BJ (cell line): ENCODE measurements at regions of chr14 and their contacts with region 1.

Region 1: GRCh38 chr14:94180655-94181271 is 6.6 kb downstream of the PPP4R4 start:
- DNase-seq: no peak
- H3K4me3 ChIP-seq: no peak overlapping the region
- H3K27me3 ChIP-seq: peaks cover 1% of the 10 kb centered on the region; the same call in 1 of the 2 replicates
- CTCF ChIP-seq: peak; percentile 59

Region 2: DNA sequence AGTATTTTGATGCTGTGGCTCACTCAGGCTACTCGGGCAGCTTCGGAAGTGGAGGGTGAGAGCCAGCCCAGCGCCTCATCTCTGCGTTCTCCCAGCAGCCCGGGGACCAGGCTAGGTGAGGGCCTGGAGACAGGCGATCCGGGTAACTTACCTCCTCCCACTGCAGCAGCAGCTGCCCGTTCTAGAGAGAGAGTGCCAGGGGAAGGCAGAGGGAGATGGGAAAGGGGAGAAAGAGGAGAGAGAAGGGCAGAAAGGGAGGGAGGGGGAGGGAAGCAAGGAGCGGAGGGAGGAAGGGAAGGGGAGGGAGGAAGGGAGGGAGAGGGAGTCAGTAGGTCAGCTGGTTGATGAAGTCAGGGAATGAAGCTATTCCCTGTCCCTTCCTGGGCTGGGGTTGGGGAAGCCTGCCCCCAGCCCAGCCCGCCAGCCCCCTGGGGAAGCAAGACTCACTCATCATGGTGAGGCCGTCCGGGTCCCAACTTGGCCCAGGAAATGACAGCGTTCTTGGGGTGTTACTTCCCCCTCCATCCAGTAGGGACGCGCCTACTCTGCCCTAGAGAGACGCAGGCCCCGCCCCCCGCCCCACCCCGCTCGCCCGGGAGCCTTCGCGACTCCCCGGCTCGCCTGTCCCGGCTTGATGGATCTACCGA is 51.5 kb before region 1 on chr14 and contains the start of gene IFI27L2:
- CTCF ChIA-PET with region 1: interaction called, 13 read pairs
- POLR2A ChIA-PET with region 1: no interaction called
- DNase-seq: no peak
- H3K4me3 ChIP-seq: peak within 1 kb of the TSS; percentile 60
- H3K27me3 ChIP-seq: no peaks in the 10 kb centered on the region
- CTCF ChIP-seq: peak; percentile 48
- polyA plus RNA-seq, gene IFI27L2: 122 and 201 TPM in 2 replicates

Region 3: DNA sequence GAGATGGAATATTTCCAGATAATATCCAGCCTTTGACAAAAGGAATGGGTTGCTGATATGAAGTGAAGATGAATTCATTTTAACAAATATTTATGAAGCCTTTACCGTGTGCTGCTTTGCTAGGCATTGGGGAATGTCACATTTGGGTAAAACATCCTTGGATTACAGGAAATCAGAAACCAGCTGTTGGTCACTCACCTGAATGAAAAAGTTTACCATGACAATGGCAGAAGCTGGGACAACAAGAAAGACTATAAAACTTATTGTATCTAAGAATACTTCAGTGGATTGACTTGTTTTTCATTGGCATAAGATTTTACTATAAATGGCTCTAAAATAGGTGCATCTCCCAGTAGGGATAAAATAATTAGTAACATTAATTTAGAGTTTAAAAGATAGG is 13.0 kb after region 1 on chr14:
- CTCF ChIA-PET with region 1: interaction called, 28 read pairs
- POLR2A ChIA-PET with region 1: no interaction called
- DNase-seq: no peak
- H3K4me3 ChIP-seq: no peak overlapping the region
- H3K27me3 ChIP-seq: no peaks in the 10 kb centered on the region
- CTCF ChIP-seq: no peak

Region 4: DNA sequence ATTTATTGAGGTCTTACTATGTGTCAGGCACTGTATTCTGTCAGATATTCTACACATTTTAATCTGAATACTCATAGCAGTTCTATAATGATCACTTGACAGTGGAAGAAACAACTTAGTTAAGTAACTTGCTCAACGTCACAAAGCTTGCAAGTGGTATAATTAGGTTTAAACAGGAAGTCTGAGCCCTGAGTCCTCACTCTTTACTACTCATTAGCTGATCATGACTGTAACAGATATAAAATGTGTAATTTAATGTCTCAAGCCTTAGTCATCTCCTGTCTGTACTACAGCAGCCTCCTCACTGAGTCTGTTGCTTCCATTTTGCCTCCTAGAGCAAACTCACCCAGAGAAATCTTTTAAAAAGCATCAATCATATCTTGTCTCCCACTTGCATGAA is 32.3 kb after region 1 on chr14:
- CTCF ChIA-PET with region 1: no interaction called
- POLR2A ChIA-PET with region 1: no interaction called
- DNase-seq: peak; percentile 41
- H3K4me3 ChIP-seq: no peak overlapping the region
- H3K27me3 ChIP-seq: no peaks in the 10 kb centered on the region
- CTCF ChIP-seq: no peak

Region 5: GRCh38 chr14:94244182-94244581 is 63.4 kb after region 1 on chr14:
- CTCF ChIA-PET with region 1: no interaction called
- POLR2A ChIA-PET with region 1: no interaction called
- DNase-seq: no peak
- H3K4me3 ChIP-seq: no peak overlapping the region
- H3K27me3 ChIP-seq: no peaks in the 10 kb centered on the region
- CTCF ChIP-seq: no peak